ENCODE measurements at regions of chr4 and their contacts with region 1.

Region 1: GRCh38 chr4:178963446-178964045 is 1521.3 kb upstream of the AGA start:
- DNase-seq: no peak
- H3K4me3 ChIP-seq: no peak overlapping the region
- H3K27ac ChIP-seq: no peak overlapping the region
- H3K4me1 ChIP-seq: no peaks in the 10 kb centered on the region
- CTCF ChIP-seq: no peak

Region 2: DNA sequence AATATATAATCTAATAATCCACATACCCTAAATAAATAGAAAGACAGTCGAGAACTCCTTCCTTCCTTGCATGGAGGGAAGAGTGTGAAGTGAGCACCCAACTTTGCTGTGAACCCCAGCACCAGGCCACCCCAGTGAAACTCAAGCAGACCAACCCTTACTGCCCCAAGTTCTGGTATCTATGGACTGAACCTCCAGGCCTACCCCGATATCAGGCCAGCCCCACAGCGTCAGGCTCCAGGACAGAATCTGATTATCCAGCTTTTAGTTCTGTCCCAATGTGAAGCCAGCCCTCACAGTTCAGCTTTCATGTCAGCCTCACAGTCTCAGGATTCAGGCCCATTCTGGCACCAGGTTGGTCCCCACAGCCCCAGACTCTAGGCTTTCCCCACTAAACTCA is 95.8 kb after region 1 on chr4:
- CTCF ChIA-PET with region 1: no interaction called
- POLR2A ChIA-PET with region 1: no interaction called
- intact Hi-C with region 1: no loop called
- DNase-seq: no peak
- H3K4me3 ChIP-seq: no peak overlapping the region
- H3K27ac ChIP-seq: no peak overlapping the region
- H3K4me1 ChIP-seq: no peaks in the 10 kb centered on the region
- CTCF ChIP-seq: no peak

Region 3: GRCh38 chr4:179307297-179308136 is 344.0 kb after region 1 on chr4:
- CTCF ChIA-PET with region 1: no interaction called
- POLR2A ChIA-PET with region 1: no interaction called
- intact Hi-C with region 1: loop called (anchors 5 kb)
- DNase-seq: peak; percentile 55
- H3K4me3 ChIP-seq: no peak overlapping the region
- H3K27ac ChIP-seq: no peak overlapping the region
- H3K4me1 ChIP-seq: no peaks in the 10 kb centered on the region
- CTCF ChIP-seq: peak; percentile 83